Activated CD8-positive, alpha-beta T cell treated with anti-CD3 and anti-CD28 coated beads for 36 hours (primary cell): ENCODE measurements at regions of chr5 and their contacts with region 1.

Region 1: DNA sequence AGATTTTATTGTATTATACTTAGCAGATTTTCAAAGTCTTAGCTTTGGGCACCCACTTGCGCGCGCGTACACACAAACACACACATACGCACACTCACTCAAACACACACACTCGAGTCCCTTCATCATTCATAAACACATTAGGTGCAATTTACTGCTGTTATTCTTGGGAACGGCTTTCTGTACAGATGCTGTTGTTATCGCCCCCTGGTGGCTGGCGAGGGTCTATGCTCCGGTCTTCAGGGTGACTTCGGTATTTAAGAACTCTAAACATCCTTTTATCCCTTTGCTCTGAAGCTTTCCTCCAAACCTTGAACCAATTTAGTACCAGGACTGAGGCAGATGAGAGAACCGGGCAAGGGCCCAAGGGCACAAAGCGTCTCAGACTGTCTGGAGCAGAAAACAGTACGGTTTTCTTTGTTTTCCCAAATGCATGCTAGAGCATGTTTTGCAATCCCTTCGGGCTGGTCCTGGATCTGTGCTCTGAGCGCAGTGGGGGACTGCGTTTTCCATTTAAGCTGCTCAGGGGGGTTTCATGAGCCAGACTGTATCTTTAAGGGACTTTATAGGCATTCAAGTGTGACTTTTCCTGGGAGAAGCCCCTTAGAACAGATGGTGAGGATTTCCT is 1.7 kb upstream of the SLIT3 start:
- DNase-seq: peak; percentile 69
- ATAC-seq: peak; percentile 74
- H3K4me3 Mint-ChIP-seq: no peak overlapping the region
- H3K27ac Mint-ChIP-seq: no peak overlapping the region
- H3K4me1 Mint-ChIP-seq: peaks cover 10% of the 10 kb centered on the region
- H3K27me3 Mint-ChIP-seq: peaks cover 47% of the 10 kb centered on the region
- CTCF ChIP-seq: peak; percentile 90

Region 2: DNA sequence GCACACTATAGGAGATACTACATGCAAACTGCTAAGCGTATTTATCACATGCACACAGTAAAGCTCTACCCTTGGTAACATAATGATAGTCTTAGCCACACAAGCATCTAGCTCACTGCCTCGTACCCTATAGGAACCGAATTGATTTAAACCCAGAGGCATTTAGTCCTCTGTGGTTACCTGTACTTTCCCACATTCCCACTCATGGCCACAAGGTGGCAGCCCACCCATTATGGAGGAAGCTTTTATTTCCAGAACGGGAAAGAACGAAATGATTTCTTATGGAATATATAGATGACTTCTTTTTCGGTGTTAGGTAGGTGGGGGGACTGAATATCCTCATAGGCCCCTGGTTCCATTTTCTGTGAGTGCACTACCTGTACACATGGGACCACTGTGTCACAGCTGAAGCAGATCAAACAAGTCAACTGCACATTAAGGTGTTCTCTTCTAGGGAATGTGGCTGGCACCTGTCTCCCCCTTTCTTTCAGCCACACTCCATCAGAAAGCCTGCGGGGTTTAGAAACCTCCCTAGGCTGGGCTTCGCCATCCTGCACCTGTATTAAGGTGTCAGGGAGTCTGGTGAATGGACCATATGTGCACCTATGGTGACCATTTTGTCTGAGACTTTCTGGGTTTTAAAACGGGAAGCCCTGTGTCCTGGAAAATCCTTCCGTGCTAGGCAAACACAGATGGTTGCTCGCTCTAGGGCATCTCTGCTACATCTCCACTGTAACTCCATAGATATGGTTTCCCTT is 314.9 kb before region 1 on chr5:
- CTCF ChIA-PET with region 1: no interaction called
- POLR2A ChIA-PET with region 1: no interaction called
- intact Hi-C with region 1: loop called (anchors 2 kb)
- DNase-seq: peak; percentile 77
- ATAC-seq: peak; percentile 61
- H3K4me3 Mint-ChIP-seq: no peak overlapping the region
- H3K27ac Mint-ChIP-seq: no peak overlapping the region
- H3K4me1 Mint-ChIP-seq: no peaks in the 10 kb centered on the region
- H3K27me3 Mint-ChIP-seq: peaks cover 12% of the 10 kb centered on the region
- CTCF ChIP-seq: peak; percentile 82